HepG2 (cell line): ENCODE measurements at regions of chr1 and their contacts with region 1.

Region 1: DNA sequence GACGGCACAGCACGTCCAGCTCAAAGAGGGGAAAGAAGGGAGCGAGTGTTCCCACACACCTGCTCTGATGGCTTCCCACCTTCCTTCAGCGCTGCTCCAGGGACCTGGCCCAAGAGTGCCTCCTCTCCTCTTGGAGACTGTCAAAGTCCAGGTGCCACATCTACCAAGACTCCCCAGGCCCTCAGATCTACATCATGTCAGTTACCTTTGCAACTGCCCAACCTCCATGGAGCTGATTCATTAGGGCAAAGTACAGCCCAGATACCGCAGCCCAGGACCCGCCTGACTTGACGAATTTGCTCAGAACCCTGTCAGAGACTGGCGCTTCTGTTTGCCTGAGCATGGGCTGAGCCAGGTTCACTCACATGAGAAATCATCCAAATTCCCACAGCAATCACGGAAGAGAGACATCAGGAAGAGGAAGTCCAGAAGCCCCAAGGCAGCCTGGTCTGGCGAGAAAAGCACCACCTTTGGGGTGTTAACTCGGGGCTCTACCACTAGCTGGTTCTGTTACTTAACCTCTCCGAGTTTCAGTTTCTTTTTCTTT is at the start of gene SEC16B:
- DNase-seq: peak; percentile 87
- ATAC-seq: peak; percentile 99
- H3K4me3 ChIP-seq: peak within 1 kb of the TSS; percentile 56 to 76 (median 70)
- H3K27ac ChIP-seq: peak within 1 kb of the TSS; percentile 88
- H3K4me1 ChIP-seq: peaks cover 30% of the 10 kb centered on the region
- H3K27me3 ChIP-seq: no peaks in the 10 kb centered on the region; a peak in 1 of 5 replicates
- CTCF ChIP-seq: 0 out of 2 replicates have a peak, but pooled peaks have one; percentile 1
- EP300 ChIP-seq: peak in 1 of 2 experiments; percentile 40; a peak in 2 of 4 replicates
- POLR2A ChIP-seq: peak; percentile 54 to 78; a peak in 3 of 4 replicates
- RAD21 ChIP-seq: no peak
- total RNA-seq, gene SEC16B: 5.3 and 5.8 TPM in 2 replicates

Region 2: GRCh38 chr1:177830531-177831135 is 139.3 kb before region 1 on chr1:
- CTCF ChIA-PET with region 1: no interaction called
- POLR2A ChIA-PET with region 1: no interaction called
- in situ Hi-C with region 1: no loop called
- intact Hi-C with region 1: no loop called
- DNase-seq: no peak
- ATAC-seq: no peak
- H3K4me3 ChIP-seq: no peak overlapping the region
- H3K27ac ChIP-seq: no peak overlapping the region
- H3K4me1 ChIP-seq: no peaks in the 10 kb centered on the region
- H3K27me3 ChIP-seq: peaks cover 0 to 3% of the 10 kb centered on the region in 2 experiments; a peak in 1 of 5 replicates
- CTCF ChIP-seq: no peak
- EP300 ChIP-seq: no peak
- POLR2A ChIP-seq: no peak
- RAD21 ChIP-seq: no peak

Region 3: DNA sequence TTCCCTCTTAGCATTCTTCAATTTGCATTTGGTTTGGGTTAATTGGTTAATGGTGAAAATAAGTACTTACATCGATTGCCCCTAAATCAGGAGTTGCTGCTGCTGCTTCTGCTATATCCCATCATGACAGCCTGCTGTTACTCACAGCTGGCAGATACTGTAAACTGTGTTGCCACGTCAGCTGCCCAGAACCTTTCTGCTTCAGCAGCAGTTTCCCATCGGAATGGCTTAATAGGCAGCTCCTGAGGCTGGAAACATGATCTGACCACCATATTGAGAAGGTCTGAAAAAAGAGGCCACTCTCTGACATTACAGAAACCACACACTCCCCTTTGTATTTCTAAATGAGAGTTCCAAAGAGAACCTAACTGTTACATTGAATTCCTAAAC is 14.2 kb after region 1 on chr1:
- CTCF ChIA-PET with region 1: no interaction called
- POLR2A ChIA-PET with region 1: interaction called, 16 read pairs
- in situ Hi-C with region 1: no loop called
- intact Hi-C with region 1: no loop called
- DNase-seq: peak; percentile 7
- ATAC-seq: no peak
- H3K4me3 ChIP-seq: no peak overlapping the region
- H3K27ac ChIP-seq: no peak overlapping the region
- H3K4me1 ChIP-seq: peaks cover 14% of the 10 kb centered on the region
- H3K27me3 ChIP-seq: no peaks in the 10 kb centered on the region
- CTCF ChIP-seq: no peak
- EP300 ChIP-seq: no peak
- POLR2A ChIP-seq: no peak
- RAD21 ChIP-seq: no peak

Region 4: GRCh38 chr1:178023181-178023618 is 53.3 kb after region 1 on chr1:
- CTCF ChIA-PET with region 1: no interaction called
- POLR2A ChIA-PET with region 1: interaction called, 12 read pairs
- in situ Hi-C with region 1: no loop called
- intact Hi-C with region 1: loop called (anchors 5 kb)
- DNase-seq: peak; percentile 68
- ATAC-seq: peak; percentile 41
- H3K4me3 ChIP-seq: no peak overlapping the region; a peak in 1 of 6 replicates
- H3K27ac ChIP-seq: peak overlapping the region; percentile 83
- H3K4me1 ChIP-seq: peaks cover 65% of the 10 kb centered on the region
- H3K27me3 ChIP-seq: no peaks in the 10 kb centered on the region
- CTCF ChIP-seq: no peak
- EP300 ChIP-seq: peak in 1 of 2 experiments; percentile 64; a peak in 1 of 4 replicates
- POLR2A ChIP-seq: no peak
- RAD21 ChIP-seq: no peak